Heart right ventricle (tissue), 16 donors: ENCODE measurements at regions of chr16 and their contacts with region 1.

Region 1: GRCh38 chr16:75519881-75520280 is 16.0 kb downstream of the CHST5 start:
- DNase-seq: no peak
- ATAC-seq: no peak
- H3K4me3 ChIP-seq: no peak overlapping the region
- H3K27ac ChIP-seq: no peak overlapping the region
- H3K4me1 ChIP-seq: peaks cover 0 to 10% (median 7%) of the 10 kb centered on the region in 9 donors
- H3K27me3 ChIP-seq: no peaks in the 10 kb centered on the region
- CTCF ChIP-seq: no peak

Region 2: DNA sequence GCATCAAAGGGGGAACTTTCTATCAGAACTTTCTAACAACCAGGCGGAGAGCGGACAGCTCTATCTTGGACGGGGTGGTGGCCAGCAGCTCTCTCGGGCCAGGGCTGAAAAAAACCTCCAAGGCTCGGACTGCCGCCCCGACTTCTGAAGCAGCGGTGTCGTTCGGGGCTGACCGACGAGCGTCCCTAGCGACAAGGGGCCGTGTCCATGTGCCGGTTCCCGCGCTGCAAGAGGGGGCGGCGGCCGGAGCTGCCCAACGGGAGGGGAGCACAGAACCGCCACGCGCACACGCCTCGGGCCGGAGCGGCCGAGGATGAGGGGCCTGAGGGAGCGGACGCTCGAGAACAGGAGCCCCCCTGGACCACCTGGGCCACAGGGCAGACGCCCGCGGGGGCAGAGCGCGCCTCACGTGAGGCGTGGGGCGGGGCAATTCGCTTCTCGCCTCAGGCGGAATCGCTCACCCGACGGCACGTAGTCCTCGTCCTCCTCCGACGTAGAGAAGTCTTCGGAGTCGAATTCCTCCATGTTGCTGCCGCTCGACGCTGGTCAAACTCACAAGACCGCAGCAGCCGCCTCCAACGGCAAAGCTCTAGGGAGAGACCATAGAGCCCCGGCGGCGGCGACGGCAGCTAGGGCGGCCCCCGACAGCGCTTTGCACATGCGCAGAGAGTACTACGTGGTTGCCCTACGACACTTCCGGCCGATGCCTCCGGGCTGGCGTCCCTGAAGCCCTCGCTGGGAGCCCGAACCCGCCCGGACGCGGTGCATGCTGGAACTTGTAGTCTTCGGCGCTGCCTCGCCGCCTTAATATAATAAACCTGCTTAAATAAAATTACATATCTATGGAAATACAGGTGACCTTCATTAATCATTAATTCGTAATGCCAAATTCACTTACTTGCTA is 86.8 kb before region 1 on chr16 and contains the start of gene CFDP1:
- intact Hi-C with region 1: loop called in 1 of 10 experiments (anchors 1 kb)
- DNase-seq: peak; percentile 96
- ATAC-seq: peak; percentile 97 to 99 (median 98)
- H3K4me3 ChIP-seq: peak within 1 kb of the TSS; percentile 57 to 99 (median 88)
- H3K27ac ChIP-seq: peak within 1 kb of the TSS; percentile 88 to 99 (median 95)
- H3K4me1 ChIP-seq: peaks cover 0 to 38% (median 26%) of the 10 kb centered on the region in 9 donors
- H3K27me3 ChIP-seq: no peaks in the 10 kb centered on the region
- CTCF ChIP-seq: peak in 1 of 9 donors; percentile 15
- total RNA-seq, gene CFDP1: 19.0 to 27.8 (median 24.9) TPM

Region 3: DNA sequence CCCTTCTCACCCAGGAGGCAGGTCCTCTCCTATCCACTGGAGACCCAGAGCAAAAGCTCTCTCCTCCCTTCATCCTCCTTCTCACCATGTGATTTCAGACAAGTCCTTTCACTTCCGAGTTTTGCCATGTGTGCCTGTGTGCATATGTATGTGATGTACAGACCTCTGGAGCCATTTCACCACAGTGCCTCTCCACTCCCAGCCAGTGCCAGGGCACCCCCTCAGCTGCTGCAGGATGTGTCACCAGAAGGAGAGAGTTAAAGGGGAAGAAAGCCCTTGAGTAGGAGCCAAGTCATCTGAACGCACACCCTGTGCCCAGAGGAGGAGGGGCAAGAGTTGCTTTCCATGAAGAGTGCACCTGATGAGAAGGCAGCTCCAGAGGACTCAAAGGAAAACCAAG is 41.8 kb before region 1 on chr16:
- intact Hi-C with region 1: loop called in 4 of 10 experiments (anchors 2 to 5 kb)
- DNase-seq: no peak
- ATAC-seq: peak in 1 of 8 donors; percentile 15
- H3K4me3 ChIP-seq: no peak overlapping the region
- H3K27ac ChIP-seq: no peak overlapping the region
- H3K4me1 ChIP-seq: no peaks in the 10 kb centered on the region
- H3K27me3 ChIP-seq: no peaks in the 10 kb centered on the region
- CTCF ChIP-seq: no peak

Region 4: GRCh38 chr16:75555707-75556430 is 36.0 kb after region 1 on chr16 and contains the start of gene TMEM231:
- intact Hi-C with region 1: loop called in 3 of 10 experiments (anchors 5 kb)
- DNase-seq: peak; percentile 98
- ATAC-seq: peak; percentile 96 to 97 (median 97)
- H3K4me3 ChIP-seq: peak within 1 kb of the TSS; percentile 47 to 89 (median 72)
- H3K27ac ChIP-seq: peak within 1 kb of the TSS; percentile 57 to 90 (median 86)
- H3K4me1 ChIP-seq: peaks cover 5 to 43% (median 15%) of the 10 kb centered on the region in 9 donors
- H3K27me3 ChIP-seq: no peaks in the 10 kb centered on the region
- CTCF ChIP-seq: peak in 1 of 9 donors; percentile 15
- total RNA-seq, gene TMEM231: 3.8 to 13.4 (median 9.6) TPM

Region 5: DNA sequence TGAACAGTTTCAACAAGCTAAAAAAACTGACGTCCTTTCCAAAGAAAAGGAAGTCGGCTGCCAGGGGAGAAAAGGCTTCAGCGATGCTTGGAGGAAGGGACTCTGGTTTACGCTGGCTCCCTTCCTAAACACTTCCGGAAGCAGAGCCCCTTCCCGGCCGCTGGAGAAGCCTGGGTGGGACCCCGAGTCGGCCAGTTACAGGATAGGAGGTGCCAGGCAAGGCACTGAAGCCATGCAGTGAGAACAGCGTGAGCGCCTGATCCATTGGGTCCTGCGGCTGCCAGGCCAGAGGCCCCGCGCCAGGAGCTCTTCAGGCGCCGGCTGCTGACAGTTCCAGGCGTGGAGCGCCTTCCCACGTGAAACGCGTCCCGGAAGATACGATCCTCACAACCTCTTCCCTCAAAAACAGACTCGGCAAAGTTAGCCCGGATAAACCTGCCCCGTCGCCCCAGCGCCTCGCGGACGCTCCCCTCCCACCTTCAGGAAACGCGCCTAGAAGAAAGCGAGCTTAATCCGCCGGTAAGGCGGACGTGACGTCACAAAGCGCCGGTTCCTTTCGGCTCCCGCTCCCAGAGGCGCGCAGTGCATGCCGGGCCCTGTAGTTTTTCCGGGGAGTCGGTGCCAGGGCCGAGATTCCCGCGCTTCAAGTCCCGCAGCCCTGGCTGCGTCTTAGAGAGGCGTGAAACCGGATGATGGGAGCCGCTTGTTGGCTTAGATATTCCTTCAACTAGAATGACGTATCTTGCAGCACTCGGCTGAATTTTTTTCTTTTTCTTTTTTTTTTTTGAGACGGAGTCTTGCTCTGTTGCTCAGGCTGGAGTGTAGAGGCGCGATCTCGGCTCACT is 103.1 kb after region 1 on chr16 and contains the start of gene ADAT1:
- intact Hi-C with region 1: loop called in 4 of 10 experiments (anchors 1 to 10 kb)
- DNase-seq: peak; percentile 97 to 98
- ATAC-seq: peak; percentile 97 to 99 (median 98)
- H3K4me3 ChIP-seq: peak within 1 kb of the TSS; percentile 57 to 90 (median 72)
- H3K27ac ChIP-seq: peak within 1 kb of the TSS; percentile 53 to 98 (median 92)
- H3K4me1 ChIP-seq: peaks cover 0 to 39% (median 24%) of the 10 kb centered on the region in 9 donors
- H3K27me3 ChIP-seq: no peaks in the 10 kb centered on the region
- CTCF ChIP-seq: peak in 1 of 9 donors; percentile 15
- total RNA-seq, gene ADAT1: 14.3 to 30.6 (median 23.3) TPM